Dendritic cell treated with granulocyte-macrophage colony-stimulating factor and Interleukin-4, amounts not matched to agents 40 ng/mL and 50 ng/mL, for 4 days (primary cell): ENCODE measurements at regions of chrX and their contacts with region 1.

Region 1: DNA sequence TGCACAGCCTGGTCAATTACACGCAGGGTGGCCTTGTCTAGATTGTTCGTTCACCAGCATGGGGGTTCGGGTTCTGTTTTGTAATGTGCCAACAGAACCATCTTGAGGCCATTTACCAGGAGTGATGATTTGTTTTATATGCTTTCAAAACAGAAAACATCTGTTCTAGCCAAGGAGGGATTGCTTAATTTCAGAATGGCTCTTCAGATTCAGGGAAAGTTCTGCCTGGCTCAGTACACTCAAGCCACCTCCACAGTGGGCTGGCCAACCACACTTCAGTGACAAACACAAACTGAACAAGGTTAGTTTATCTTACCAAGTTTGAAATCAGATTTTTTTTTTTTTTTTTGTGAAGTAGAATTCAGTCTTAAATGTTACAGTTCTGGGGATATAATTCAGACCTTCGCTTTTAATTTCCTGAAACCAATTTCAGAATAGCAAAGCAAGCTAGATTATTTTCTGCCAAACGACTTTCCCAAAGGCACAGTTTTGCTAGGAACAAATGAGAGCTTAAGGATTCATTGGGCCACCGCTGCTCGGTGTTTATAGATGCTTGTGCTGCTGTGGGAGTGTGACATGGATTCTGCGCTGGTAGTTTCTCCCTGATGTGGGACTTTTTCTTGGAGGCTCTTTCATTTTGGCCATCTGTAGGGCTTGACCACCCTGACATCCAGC is 23.4 kb downstream of the SMS start:
- H3K4me3 Mint-ChIP-seq: no peak overlapping the region
- H3K27ac Mint-ChIP-seq: no peak overlapping the region
- H3K4me1 Mint-ChIP-seq: peaks cover 21% of the 10 kb centered on the region
- H3K27me3 Mint-ChIP-seq: no peaks in the 10 kb centered on the region

Region 2: DNA sequence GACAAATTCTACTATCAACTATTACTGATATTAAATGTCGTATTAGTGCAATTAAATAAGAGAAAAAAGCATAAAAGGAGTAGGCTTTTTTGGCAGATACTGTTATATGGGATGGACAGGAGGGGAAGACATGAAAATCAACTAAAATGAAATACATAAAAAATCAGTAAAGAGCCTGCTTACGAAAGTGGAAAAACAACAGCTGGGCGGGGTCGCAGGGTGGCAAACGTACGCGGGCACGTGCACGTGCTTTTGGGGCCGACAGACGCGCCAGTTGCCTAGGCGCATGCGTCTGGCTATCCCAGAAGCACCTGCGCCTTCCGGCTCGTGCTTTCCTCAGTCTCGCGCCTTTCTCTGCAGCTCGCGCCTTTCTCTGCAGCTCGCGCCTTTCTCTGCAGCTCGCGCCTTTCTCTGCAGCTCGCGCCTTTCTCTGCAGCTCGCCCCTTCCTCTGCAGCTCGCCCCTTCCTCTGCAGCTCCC is 107.9 kb before region 1 on chrX and contains the start of gene YY2:
- intact Hi-C with region 1: loop called (anchors 10 kb)
- H3K4me3 Mint-ChIP-seq: no peak within 1 kb of the TSS
- H3K27ac Mint-ChIP-seq: no peak within 1 kb of the TSS
- H3K4me1 Mint-ChIP-seq: no peaks in the 10 kb centered on the region
- H3K27me3 Mint-ChIP-seq: no peaks in the 10 kb centered on the region

Region 3: DNA sequence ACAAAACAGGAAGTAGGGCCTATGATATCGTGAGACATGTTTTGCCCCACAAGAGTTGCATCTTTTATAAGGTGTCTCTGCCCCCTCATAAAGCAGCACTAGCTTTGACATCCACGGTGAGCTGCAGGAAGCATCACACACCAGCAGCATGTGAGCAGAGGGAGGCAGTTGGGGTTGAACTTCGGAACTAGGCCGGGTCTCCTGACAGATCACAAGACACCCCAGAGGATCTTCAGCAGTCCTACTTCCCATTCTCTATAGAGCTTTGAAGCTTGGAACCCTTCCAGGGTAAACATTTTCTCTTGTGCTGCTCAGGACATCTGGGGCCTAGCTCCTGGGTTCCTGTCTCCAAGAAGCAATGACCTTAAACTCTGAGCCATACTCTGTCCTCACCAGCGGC is 80.6 kb before region 1 on chrX:
- intact Hi-C with region 1: loop called (anchors 10 kb)
- H3K4me3 Mint-ChIP-seq: no peak overlapping the region
- H3K27ac Mint-ChIP-seq: peak overlapping the region; percentile 72
- H3K4me1 Mint-ChIP-seq: peaks cover 8% of the 10 kb centered on the region
- H3K27me3 Mint-ChIP-seq: no peaks in the 10 kb centered on the region